Mammary epithelial cell (primary cell): ENCODE measurements at regions of chr11 and their contacts with region 1.

Region 1: DNA sequence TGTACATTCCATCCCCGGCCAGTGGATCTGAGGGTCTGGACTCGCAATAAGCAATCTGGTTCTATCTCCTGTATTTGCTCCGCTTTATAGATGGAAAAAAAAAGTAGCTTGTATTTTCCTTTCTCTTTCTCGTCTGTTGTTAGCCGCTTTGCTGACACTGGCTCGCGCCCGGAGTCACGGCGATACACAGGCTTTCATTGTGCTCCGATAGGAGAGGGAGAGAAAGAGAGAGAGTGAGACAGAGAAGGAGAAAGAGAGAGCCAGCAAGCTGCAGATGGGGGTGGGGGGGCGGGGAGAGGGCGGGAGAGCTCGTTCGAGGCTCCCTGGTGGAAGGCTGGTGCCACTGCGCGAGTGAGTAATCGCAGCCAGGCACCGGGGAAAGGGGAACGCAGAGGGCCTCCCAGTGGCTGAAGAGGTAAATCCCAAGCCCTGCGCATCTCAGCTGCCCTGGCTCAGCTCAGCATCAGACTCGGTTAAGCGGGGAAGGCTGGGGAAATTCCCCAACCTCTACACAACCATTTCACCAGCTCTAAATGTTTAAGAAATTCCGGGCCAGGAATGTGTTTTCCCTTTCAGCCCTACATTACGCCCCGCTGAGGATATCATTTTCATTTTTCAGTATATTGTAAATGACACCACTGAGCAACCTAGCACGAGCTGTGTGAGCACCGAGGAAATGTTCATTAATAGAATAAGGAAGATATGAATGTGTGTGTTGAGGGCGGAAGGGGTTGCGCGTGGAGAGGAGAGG is at the start of gene MAML2:
- DNase-seq: peak; percentile 92
- H3K4me3 ChIP-seq: peak within 1 kb of the TSS; percentile 58 to 79 (median 77)
- H3K27ac ChIP-seq: peak within 1 kb of the TSS; percentile 79
- H3K4me1 ChIP-seq: peaks cover 39% of the 10 kb centered on the region
- H3K27me3 ChIP-seq: no peaks in the 10 kb centered on the region
- CTCF ChIP-seq: peak; percentile 86 to 96
- total RNA-seq, gene MAML2: 9.5 to 14.2 TPM

Region 2: GRCh38 chr11:95835768-95836488 is 507.2 kb before region 1 on chr11:
- CTCF ChIA-PET with region 1: interaction called, 16 read pairs
- dilution Hi-C with region 1: no loop called
- in situ Hi-C with region 1: no loop called
- intact Hi-C with region 1: loop called (anchors 1 kb)
- DNase-seq: peak; percentile 81
- H3K4me3 ChIP-seq: no peak overlapping the region
- H3K27ac ChIP-seq: peak overlapping the region; percentile 14
- H3K4me1 ChIP-seq: no peaks in the 10 kb centered on the region
- H3K27me3 ChIP-seq: no peaks in the 10 kb centered on the region
- CTCF ChIP-seq: peak; percentile 93 to 98

Region 3: DNA sequence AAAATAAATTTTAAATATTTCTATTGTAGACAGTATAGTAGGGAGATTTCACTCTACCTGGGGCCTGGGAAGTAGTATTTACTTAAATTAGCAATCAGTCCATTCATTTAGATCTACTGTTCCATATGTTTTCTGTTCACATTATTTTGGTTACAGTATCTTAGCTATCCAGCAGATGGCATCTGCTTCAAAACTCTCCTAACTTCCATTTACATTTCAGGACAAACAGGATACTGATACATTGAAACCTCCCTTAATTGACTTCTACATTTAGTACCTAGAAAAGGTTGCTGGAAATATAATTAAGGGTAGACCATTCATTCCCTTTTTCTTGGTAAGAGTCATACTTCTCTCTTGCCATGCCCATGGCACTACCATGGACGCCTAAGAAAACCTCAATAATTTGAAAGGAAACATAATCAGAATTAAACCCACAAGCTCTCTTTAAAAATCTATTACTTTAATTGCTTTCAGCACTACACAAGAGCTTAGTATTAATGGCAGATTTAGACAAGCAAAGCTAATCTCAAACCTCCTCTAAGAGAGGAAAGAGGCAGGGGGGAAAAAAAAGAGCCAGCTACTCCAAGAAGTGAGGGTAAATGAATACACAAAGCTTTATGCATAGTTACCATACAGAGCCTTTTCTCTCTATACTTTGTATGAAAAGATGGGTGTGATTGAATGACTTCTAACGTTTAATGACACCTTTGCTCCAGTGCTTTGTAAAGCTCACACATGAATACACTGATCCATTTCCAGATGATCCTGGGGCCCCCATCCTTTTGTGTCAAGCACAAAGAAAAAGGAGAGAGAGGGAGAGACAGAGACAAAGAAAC is 288.0 kb before region 1 on chr11:
- CTCF ChIA-PET with region 1: interaction called, 30 read pairs
- dilution Hi-C with region 1: no loop called
- in situ Hi-C with region 1: loop called (anchors 5 to 10 kb)
- intact Hi-C with region 1: loop called (anchors 1 kb)
- DNase-seq: peak; percentile 35
- H3K4me3 ChIP-seq: no peak overlapping the region
- H3K27ac ChIP-seq: no peak overlapping the region
- H3K4me1 ChIP-seq: peaks cover 33% of the 10 kb centered on the region
- H3K27me3 ChIP-seq: no peaks in the 10 kb centered on the region
- CTCF ChIP-seq: peak; percentile 58 to 67

Region 4: GRCh38 chr11:96122601-96123074 is 220.5 kb before region 1 on chr11:
- CTCF ChIA-PET with region 1: interaction called, 11 read pairs
- dilution Hi-C with region 1: no loop called
- in situ Hi-C with region 1: no loop called
- intact Hi-C with region 1: loop called (anchors 1 kb)
- DNase-seq: peak; percentile 98
- H3K4me3 ChIP-seq: no peak overlapping the region
- H3K27ac ChIP-seq: peak overlapping the region; percentile 67
- H3K4me1 ChIP-seq: peaks cover 19% of the 10 kb centered on the region
- H3K27me3 ChIP-seq: no peaks in the 10 kb centered on the region
- CTCF ChIP-seq: peak; percentile 29 to 32

Region 5: GRCh38 chr11:96257972-96258934 is 84.9 kb before region 1 on chr11:
- CTCF ChIA-PET with region 1: no interaction called
- dilution Hi-C with region 1: loop called (anchors 5 kb)
- in situ Hi-C with region 1: no loop called
- intact Hi-C with region 1: loop called (anchors 1 kb)
- DNase-seq: no peak
- H3K4me3 ChIP-seq: peak overlapping the region in 2 of 3 experiments; percentile 4 to 30
- H3K27ac ChIP-seq: peak overlapping the region; percentile 53
- H3K4me1 ChIP-seq: peaks cover 54% of the 10 kb centered on the region
- H3K27me3 ChIP-seq: no peaks in the 10 kb centered on the region
- CTCF ChIP-seq: no peak

Region 6: DNA sequence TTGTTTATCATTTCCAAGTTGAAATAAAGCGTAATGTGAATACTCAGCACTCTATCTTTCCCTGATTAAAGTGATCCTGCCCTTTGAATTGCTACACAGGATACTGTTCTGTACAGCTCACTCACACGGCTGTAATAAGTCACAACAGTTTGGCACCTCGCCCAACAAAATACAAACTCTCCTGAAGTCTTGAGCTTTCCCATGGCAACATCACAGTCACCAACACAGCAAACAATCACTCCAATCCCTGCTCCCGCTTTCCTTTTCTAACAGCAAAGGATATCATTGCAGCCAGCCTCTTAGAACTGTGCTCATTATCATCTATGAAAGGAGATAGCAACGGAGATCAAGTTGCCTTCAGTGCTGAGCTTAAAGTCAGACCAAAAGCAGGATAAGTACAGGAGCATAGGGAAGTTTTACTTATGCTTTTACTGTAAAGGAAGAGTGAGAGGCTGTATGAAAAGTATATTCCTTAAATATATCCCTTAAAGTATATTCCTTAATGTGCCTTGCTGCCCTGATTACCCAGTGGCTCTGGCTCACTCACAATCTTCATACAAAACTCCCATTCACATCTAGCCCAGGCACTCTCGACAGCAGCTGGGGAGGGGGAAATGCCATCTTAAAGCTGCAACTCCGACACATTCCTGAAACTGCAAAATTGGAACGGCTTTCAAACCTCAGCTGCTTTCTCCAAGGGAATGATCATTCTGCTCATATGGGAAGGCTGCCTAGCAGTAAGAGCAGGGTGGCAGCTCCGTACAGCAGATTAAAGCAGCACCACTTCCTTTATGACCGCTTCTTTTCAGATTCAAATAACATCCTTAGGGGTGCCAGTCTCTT is 36.0 kb before region 1 on chr11:
- CTCF ChIA-PET with region 1: interaction called, 6 read pairs
- dilution Hi-C with region 1: no loop called
- in situ Hi-C with region 1: no loop called
- intact Hi-C with region 1: loop called (anchors 1 kb)
- DNase-seq: peak; percentile 99
- H3K4me3 ChIP-seq: peak overlapping the region; percentile 12 to 26 (median 13)
- H3K27ac ChIP-seq: peak overlapping the region; percentile 99
- H3K4me1 ChIP-seq: peaks cover 76% of the 10 kb centered on the region
- H3K27me3 ChIP-seq: no peaks in the 10 kb centered on the region
- CTCF ChIP-seq: no peak

Region 7: GRCh38 chr11:96481204-96481603 is 138.1 kb after region 1 on chr11:
- CTCF ChIA-PET with region 1: interaction called, 26 read pairs
- dilution Hi-C with region 1: no loop called
- in situ Hi-C with region 1: no loop called
- intact Hi-C with region 1: no loop called
- DNase-seq: peak; percentile 28
- H3K4me3 ChIP-seq: no peak overlapping the region
- H3K27ac ChIP-seq: no peak overlapping the region
- H3K4me1 ChIP-seq: peaks cover 5% of the 10 kb centered on the region
- H3K27me3 ChIP-seq: no peaks in the 10 kb centered on the region
- CTCF ChIP-seq: no peak